ENCODE measurements at regions of chr15 and their contacts with region 1.

Region 1: GRCh38 chr15:66685638-66686150 is 16.3 kb upstream of the SMAD6 start:
- DNase-seq: no peak
- H3K4me3 ChIP-seq: no peak overlapping the region
- H3K27ac ChIP-seq: no peak overlapping the region
- H3K27me3 ChIP-seq: no peaks in the 10 kb centered on the region
- CTCF ChIP-seq: peak; percentile 50

Region 2: DNA sequence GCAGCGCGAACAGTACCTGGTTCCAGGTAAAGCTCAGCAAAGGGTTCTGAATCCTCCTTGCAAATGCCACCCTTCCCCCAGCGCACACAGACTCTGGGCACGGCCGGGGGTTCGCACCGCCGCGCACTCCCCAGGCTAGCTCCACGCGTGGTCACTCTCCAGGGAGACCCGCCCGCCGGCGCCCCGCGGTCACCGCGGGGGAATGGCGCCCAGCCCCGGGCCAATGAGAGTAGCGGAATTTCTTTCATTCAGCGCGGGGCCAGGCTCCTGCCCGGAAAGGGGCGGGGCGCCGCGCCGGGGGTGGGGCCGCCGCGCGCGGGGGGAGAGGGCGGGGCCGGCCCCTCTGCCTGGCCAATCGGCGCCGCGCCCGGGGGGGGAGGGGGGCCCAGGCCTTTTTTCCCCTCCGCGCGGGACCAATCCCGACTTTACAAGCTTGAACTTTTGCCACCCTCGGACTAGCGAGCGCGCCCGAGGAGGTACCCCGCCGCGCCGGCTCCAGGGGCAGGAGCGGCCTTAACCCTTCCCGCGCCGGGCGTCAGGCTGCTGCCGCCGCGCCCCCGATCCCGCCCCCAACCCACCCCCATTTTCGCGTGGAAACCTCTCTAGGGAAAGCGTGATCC is 15.2 kb after region 1 on chr15:
- CTCF ChIA-PET with region 1: interaction called, 11 read pairs
- POLR2A ChIA-PET with region 1: interaction called, 3 read pairs
- DNase-seq: peak; percentile 84
- H3K4me3 ChIP-seq: peak overlapping the region; percentile 67
- H3K27ac ChIP-seq: no peak overlapping the region
- H3K27me3 ChIP-seq: no peaks in the 10 kb centered on the region
- CTCF ChIP-seq: no peak